Esophagus squamous epithelium (tissue), 5 donors: ENCODE measurements at regions of chr16 and their contacts with region 1.

Region 1: DNA sequence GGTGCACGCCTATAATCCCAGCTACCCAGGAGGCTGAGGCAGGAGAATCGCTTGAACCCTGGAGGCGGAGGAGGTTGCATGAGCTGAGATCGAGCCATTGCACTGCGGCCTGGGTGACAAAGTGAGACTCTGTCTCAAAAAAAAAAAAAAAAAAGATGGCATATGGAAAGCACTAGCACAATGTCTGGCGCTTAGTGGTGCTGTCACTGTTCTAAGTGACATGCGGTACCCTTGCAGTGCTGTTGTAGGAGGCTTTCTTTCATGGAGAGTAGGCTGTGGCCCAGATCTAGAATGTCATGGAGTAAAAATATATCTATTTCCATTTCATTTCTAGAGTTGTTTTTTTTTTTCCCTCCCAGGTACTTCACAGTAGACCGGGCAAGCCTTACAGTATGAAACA is 14.6 kb upstream of the METTL9 start:
- DNase-seq: no peak
- H3K4me3 ChIP-seq: no peak overlapping the region
- H3K27ac ChIP-seq: no peak overlapping the region
- H3K4me1 ChIP-seq: peaks cover 5 to 37% (median 10%) of the 10 kb centered on the region in 3 donors
- H3K27me3 ChIP-seq: no peaks in the 10 kb centered on the region
- CTCF ChIP-seq: no peak
- POLR2A ChIP-seq: no peak

Region 2: GRCh38 chr16:21253470-21253869 is 331.3 kb before region 1 on chr16:
- intact Hi-C with region 1: no loop called
- DNase-seq: no peak
- H3K4me3 ChIP-seq: no peak overlapping the region
- H3K27ac ChIP-seq: no peak overlapping the region
- H3K4me1 ChIP-seq: no peaks in the 10 kb centered on the region
- H3K27me3 ChIP-seq: peaks cover 0 to 39% (median 0%) of the 10 kb centered on the region in 4 donors
- CTCF ChIP-seq: no peak
- POLR2A ChIP-seq: no peak

Region 3: DNA sequence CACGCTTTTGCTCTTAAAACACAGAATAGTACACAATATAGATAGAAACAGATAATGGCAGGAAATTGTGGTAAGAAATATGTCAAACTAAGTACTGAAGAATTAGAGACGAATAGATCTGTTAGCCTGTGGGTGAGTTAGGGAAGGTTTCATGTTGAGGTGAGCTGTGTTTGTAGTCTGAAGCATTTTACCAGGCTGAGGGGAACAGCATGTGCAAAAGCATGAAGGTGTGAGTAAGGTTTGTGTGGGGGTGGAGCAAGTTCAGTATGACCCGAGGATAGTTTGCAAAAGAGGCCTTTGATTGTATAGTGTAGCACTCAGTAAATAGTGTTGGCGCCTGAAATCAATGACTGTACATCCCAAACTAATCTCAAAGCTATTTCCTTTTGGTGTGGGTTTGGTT is 53.8 kb after region 1 on chr16:
- intact Hi-C with region 1: loop called (anchors 5 kb)
- DNase-seq: no peak
- H3K4me3 ChIP-seq: no peak overlapping the region
- H3K27ac ChIP-seq: peak overlapping the region in 2 of 4 donors; percentile 7 to 34
- H3K4me1 ChIP-seq: peaks cover 0 to 55% (median 0%) of the 10 kb centered on the region in 3 donors
- H3K27me3 ChIP-seq: no peaks in the 10 kb centered on the region
- CTCF ChIP-seq: peak in 1 of 6 experiments; percentile 12
- POLR2A ChIP-seq: no peak

Region 4: GRCh38 chr16:21713549-21714368 is 128.9 kb after region 1 on chr16:
- intact Hi-C with region 1: loop called (anchors 5 kb)
- DNase-seq: no peak
- H3K4me3 ChIP-seq: no peak overlapping the region
- H3K27ac ChIP-seq: no peak overlapping the region
- H3K4me1 ChIP-seq: peaks cover 0 to under 1% (median 0%) of the 10 kb centered on the region in 3 donors
- H3K27me3 ChIP-seq: no peaks in the 10 kb centered on the region
- CTCF ChIP-seq: no peak
- POLR2A ChIP-seq: no peak